Right ventricle myocardium inferior (tissue), 1 donor: ENCODE measurements at regions of chr6 and their contacts with region 1.

Region 1: DNA sequence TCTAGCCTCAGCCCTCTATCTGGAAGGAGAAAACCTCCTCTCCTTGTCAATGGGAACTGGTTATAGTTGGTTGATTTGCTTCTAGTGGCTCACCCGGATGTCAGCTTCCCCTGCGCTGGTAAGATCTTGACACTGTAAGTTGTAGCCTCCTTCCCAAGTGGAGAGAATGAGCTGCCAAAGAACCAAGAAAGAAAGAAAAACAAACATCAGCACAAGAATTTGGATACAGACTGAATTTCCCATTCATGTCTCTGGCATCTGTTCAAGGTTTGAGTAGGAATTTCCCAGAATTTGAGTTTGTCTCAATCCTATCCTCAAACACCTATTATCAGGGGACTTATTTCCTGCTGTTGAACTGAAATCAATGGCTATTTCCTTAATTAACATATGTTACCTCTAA is 44.1 kb downstream of the ELOVL2 start:
- DNase-seq: no peak
- ATAC-seq: peak; percentile 81

Region 2: DNA sequence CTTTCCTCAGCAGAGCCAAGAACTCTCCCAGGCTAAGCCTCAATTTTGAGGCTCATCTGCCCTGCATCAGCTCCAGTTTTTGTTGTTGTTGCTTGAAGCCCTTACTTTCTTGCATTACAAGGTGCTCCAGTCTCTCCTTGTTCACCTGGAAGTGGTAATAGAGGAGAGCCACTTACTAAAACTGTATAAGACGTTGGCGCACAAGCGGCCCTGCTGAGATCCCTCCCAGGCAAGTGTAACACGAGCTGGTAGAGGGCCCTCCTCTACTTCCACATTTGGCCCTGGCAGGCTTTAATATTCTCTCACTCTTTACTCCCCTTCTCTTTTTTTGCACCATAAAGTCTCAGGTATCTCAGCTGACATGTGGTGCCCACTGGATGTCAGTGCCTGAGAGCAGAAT is 137.6 kb before region 1 on chr6:
- intact Hi-C with region 1: no loop called
- DNase-seq: no peak
- ATAC-seq: no peak

Region 3: GRCh38 chr6:11043961-11044711 is 44.1 kb after region 1 on chr6 and contains the start of gene ELOVL2:
- intact Hi-C with region 1: loop called (anchors 5 kb)
- DNase-seq: peak; percentile 68
- ATAC-seq: peak; percentile 87
- total RNA-seq, gene ELOVL2: 2.4 TPM